ENCODE measurements at regions of chr6 and their contacts with region 1.

Region 1: GRCh38 chr6:125906158-125906998 is 50.2 kb upstream of the HINT3 start:
- DNase-seq: peak in 1 of 2 experiments; percentile 85
- H3K4me3 ChIP-seq: no peak overlapping the region
- H3K27ac ChIP-seq: no peak overlapping the region
- H3K4me1 ChIP-seq: no peaks in the 10 kb centered on the region; a peak in 1 of 7 replicates
- H3K27me3 ChIP-seq: no peaks in the 10 kb centered on the region
- CTCF ChIP-seq: peak; percentile 78 to 93 (median 86)
- EP300 ChIP-seq: no peak
- POLR2A ChIP-seq: no peak
- RAD21 ChIP-seq: peak; percentile 52 to 60

Region 2: DNA sequence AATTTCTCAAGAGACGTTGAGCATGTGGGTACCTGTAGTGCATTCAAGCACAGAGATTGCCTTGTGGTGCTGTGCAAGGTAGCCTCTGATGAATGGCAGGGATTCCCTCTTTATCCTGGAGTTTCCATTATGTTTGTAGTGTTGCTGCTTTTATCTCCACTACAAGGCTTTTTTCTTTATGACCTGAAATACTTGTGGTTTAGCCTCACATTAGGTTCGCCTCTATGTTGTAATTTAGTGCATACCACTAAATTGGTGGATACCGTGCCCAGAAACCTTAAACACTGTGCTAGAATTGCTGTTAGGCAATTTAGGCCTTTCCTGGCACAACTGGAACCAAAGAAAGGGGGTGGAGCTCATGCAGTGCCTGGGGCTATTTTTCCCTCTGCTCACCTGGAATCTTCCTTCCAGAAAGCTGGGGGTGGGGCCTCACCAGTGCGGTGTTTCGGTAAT is 38.9 kb before region 1 on chr6:
- CTCF ChIA-PET with region 1: interaction called, 16 read pairs
- POLR2A ChIA-PET with region 1: interaction called, 3 read pairs
- DNase-seq: peak; percentile 53
- H3K4me3 ChIP-seq: peak overlapping the region in 1 of 4 experiments; percentile 8; a peak in 1 of 8 replicates
- H3K27ac ChIP-seq: no peak overlapping the region
- H3K4me1 ChIP-seq: peaks cover 0 to 7% (median 3%) of the 10 kb centered on the region in 4 experiments; a peak in 3 of 7 replicates
- H3K27me3 ChIP-seq: no peaks in the 10 kb centered on the region
- CTCF ChIP-seq: no peak
- EP300 ChIP-seq: no peak
- POLR2A ChIP-seq: no peak
- RAD21 ChIP-seq: no peak

Region 3: DNA sequence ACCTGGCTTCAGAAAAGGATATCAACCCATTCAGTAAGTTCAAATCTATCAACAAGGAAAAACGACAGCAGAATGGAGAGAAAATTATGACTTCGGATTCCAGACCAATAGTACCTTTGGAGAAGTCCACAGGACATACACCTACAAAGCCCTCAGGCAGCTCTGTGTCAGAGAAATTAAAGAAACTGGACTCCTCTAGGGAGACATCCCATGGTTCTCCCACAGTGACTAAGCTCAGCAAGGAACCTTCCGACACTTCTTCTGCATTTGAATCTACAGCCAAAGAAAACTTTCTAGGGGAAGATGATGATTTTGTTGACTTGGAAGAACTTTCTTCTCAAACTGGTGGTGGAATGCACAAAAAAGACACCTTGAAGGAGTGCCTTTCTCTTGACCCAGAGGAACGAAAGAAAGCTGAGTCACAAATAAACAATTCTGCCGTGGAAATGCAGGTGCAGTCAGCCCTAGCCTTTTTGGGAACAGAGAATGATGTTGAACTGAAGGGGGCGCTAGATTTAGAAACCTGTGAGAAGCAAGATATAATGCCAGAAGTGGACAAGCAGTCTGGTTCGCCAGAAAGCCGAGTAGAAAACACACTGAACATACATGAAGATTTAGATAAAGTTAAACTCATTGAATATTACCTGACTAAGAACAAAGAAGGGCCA is 17.3 kb before region 1 on chr6:
- CTCF ChIA-PET with region 1: interaction called, 122 read pairs
- POLR2A ChIA-PET with region 1: interaction called, 4 read pairs
- DNase-seq: no peak
- H3K4me3 ChIP-seq: no peak overlapping the region
- H3K27ac ChIP-seq: no peak overlapping the region
- H3K4me1 ChIP-seq: no peaks in the 10 kb centered on the region
- H3K27me3 ChIP-seq: no peaks in the 10 kb centered on the region
- CTCF ChIP-seq: peak in 2 of 3 experiments; percentile 63 to 74; a peak in 3 of 4 replicates
- EP300 ChIP-seq: no peak
- POLR2A ChIP-seq: no peak
- RAD21 ChIP-seq: peak; percentile 16 to 36; a peak in 3 of 4 replicates

Region 4: DNA sequence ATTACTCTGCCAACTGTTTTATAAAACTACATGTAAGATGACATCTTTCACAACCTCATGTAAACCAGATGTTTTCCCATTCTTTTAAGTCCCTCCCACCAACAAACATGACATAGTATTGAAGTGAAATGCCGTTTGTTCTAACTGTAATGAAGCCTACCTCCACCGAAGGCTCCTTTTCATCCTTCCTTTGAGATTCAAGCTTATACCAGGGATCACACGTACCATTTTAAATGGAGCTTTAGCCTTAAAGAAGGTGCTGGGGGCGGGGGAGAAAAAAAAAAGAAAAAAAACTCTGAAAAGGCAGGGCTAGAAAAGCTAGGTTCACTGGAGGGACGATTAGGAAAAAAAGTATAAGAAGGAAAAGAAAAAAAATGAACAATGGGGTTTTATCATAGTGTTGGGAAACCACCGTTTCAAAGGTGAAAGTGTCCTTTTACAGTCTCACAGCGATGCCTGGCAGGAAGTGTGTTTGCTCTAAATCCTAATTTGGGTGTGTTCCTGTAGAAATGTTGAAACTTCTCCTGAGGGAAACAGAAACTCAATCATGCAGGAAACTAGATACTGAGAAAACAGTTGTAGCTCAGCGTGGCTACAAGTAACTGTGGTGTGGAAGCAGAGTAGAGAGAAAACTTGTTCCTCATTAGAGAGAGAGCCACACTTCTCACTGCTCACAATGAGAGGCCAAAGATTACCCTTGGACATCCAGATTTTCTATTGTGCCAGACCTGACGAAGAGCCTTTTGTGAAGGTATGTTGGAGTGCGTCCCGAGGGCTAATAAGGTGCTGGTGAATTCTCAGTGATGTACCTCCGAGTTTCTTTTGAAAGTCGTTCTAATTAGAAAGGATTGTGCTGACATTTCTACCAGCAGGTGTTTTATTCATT is 12.5 kb after region 1 on chr6:
- CTCF ChIA-PET with region 1: interaction called, 78 read pairs
- POLR2A ChIA-PET with region 1: no interaction called
- DNase-seq: no peak
- H3K4me3 ChIP-seq: no peak overlapping the region
- H3K27ac ChIP-seq: no peak overlapping the region
- H3K4me1 ChIP-seq: peaks cover 0 to 11% (median 7%) of the 10 kb centered on the region in 4 experiments; a peak in 6 of 7 replicates
- H3K27me3 ChIP-seq: no peaks in the 10 kb centered on the region
- CTCF ChIP-seq: no peak
- EP300 ChIP-seq: no peak
- POLR2A ChIP-seq: no peak
- RAD21 ChIP-seq: no peak

Region 5: DNA sequence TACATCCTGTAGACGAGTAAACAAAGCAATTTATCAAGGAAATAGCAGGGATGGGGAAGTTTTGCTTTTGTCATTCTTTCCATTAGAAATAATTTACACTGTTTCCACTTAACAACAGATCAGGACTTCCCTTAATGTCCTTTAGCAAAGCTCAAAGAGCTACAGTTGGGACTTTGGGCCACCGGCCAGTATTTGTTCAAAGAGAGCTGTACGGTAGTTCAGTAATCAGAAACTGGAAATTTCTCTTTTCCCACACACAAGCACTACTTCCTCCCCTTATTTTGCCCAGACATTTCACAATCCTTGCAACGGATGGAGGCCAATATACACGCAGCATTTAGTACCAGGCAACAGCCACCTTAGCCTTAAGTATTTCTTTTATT is 38.0 kb after region 1 on chr6:
- CTCF ChIA-PET with region 1: interaction called, 13 read pairs
- POLR2A ChIA-PET with region 1: no interaction called
- DNase-seq: no peak
- H3K4me3 ChIP-seq: no peak overlapping the region
- H3K27ac ChIP-seq: no peak overlapping the region
- H3K4me1 ChIP-seq: no peaks in the 10 kb centered on the region
- H3K27me3 ChIP-seq: no peaks in the 10 kb centered on the region; a peak in 2 of 7 replicates
- CTCF ChIP-seq: no peak
- EP300 ChIP-seq: no peak
- POLR2A ChIP-seq: no peak
- RAD21 ChIP-seq: no peak

Region 6: DNA sequence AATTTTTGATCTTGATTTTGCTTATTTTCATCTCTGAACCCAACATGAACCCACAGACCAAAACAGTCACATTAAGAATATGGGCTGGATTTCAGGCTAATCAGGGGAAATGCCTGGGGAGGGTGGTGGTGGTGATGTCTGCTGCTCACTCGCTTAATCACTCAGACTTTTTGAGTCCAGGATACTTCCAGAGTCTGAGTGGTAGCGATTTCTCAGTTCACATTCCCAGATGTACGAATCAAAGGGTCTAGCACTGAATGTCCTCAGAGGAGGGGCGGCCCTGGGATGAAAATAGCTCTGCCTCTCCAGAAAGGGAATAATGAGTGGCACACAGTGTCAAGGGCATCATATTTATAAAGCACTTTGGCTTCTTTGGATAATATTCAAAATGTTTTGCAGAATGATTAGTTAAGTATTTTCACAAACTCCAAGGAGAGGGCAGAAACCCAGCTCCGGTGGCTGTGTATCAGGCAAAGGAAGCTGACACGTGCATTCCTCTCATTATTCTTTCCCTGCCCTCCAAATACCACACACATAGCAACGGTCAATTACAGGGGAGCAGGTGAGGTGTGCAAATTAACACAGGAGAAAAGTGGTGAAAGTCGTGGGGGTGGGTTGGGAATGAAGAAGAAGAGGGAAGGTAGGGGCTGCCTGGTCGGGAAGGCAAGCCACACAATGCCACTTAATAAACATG is 866.9 kb after region 1 on chr6:
- CTCF ChIA-PET with region 1: no interaction called
- POLR2A ChIA-PET with region 1: no interaction called
- DNase-seq: no peak
- H3K4me3 ChIP-seq: no peak overlapping the region
- H3K27ac ChIP-seq: no peak overlapping the region
- H3K4me1 ChIP-seq: peaks cover 0 to 5% (median 4%) of the 10 kb centered on the region in 4 experiments; a peak in 4 of 7 replicates
- H3K27me3 ChIP-seq: no peaks in the 10 kb centered on the region
- CTCF ChIP-seq: no peak
- EP300 ChIP-seq: no peak
- POLR2A ChIP-seq: no peak
- RAD21 ChIP-seq: no peak

Measured in H1 (cell line).